ENCODE measurements at regions of chrX and their contacts with region 1.

Region 1: GRCh38 chrX:16160729-16161128 is 6.6 kb upstream of the MAGEB17 start:
- DNase-seq: peak; percentile 93
- ATAC-seq: peak; percentile 84
- H3K4me3 ChIP-seq: no peak overlapping the region
- H3K27ac ChIP-seq: peak overlapping the region; percentile 65
- H3K4me1 ChIP-seq: peaks cover 35% of the 10 kb centered on the region
- H3K27me3 ChIP-seq: no peaks in the 10 kb centered on the region
- CTCF ChIP-seq: no peak

Region 2: DNA sequence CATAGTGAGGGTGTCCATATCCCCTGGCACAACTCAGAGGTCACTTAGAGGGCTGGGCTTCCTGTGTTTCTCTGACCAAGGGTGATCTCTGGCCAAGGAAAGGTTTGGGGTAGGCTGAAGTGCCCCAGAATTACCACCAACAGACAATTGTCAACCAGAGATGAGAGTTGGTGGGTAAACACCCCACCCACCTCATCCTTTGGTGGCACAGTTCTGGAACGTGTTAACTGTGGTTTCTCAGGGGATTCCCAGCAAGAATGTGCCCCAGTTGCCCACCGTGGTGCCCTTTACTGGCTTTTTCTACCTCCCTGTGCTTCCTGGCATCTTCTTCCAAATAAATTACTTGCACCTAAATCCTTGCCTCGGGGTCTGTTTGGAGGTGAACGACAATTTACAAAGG is 20.3 kb before region 1 on chrX:
- CTCF ChIA-PET with region 1: no interaction called
- POLR2A ChIA-PET with region 1: no interaction called
- intact Hi-C with region 1: loop called (anchors 2 kb)
- DNase-seq: no peak
- ATAC-seq: peak; percentile 37
- H3K4me3 ChIP-seq: peak overlapping the region; percentile 37
- H3K27ac ChIP-seq: peak overlapping the region; percentile 87
- H3K4me1 ChIP-seq: peaks cover 29% of the 10 kb centered on the region
- H3K27me3 ChIP-seq: no peaks in the 10 kb centered on the region
- CTCF ChIP-seq: no peak

Measured in PC-3 (cell line).